Activated CD8-positive, alpha-beta memory T cell treated with anti-CD3 and anti-CD28 coated beads, Interleukin-2, amount 10 ng/mL, durations not matched to agents 7 days and 5 days (primary cell): ENCODE measurements at regions of chr17 and their contacts with region 1.

Region 1: DNA sequence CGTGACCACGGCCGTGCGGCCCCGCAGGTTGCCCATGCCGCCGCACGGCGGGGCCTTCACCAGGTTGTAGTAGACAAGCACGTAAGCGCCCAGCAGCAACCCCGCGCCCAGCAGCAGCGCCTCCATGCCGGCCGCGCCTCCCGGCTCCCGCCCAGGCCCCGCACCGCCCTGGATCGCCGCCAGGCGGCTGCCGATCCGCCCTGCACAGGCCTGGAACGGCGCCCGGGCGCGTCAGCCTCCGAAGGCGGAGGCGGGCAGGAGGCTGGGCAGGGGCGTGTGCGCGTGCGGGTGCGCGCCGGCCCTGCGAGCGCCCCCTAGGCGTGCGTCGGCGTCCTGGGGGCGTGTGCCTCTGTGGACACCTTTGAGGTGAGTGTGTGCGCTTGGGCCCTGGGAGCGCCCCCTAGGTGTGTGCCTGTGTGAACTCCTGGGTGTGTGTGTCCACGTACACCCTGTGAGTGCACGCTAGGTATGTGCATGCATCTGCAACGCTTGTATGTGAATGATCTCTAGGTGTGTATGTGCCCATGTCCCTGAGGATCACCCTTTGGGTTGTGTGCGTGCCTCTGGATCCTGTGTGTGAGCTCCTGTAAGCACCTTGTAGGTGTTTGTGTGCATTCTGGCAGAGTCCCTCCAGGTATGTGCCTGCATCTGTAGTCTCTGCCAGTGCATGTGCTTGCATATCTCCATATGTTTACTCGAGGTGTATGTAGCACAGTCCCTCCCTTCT is at the start of gene DHRS13:
- DNase-seq: peak; percentile 94
- ATAC-seq: peak; percentile 97
- H3K4me3 Mint-ChIP-seq: peak within 1 kb of the TSS; percentile 89
- H3K27ac Mint-ChIP-seq: peak within 1 kb of the TSS; percentile 84
- H3K4me1 Mint-ChIP-seq: peaks cover 43% of the 10 kb centered on the region
- H3K27me3 Mint-ChIP-seq: no peaks in the 10 kb centered on the region
- total RNA-seq, gene DHRS13: 23.1 to 25.9 TPM

Region 2: DNA sequence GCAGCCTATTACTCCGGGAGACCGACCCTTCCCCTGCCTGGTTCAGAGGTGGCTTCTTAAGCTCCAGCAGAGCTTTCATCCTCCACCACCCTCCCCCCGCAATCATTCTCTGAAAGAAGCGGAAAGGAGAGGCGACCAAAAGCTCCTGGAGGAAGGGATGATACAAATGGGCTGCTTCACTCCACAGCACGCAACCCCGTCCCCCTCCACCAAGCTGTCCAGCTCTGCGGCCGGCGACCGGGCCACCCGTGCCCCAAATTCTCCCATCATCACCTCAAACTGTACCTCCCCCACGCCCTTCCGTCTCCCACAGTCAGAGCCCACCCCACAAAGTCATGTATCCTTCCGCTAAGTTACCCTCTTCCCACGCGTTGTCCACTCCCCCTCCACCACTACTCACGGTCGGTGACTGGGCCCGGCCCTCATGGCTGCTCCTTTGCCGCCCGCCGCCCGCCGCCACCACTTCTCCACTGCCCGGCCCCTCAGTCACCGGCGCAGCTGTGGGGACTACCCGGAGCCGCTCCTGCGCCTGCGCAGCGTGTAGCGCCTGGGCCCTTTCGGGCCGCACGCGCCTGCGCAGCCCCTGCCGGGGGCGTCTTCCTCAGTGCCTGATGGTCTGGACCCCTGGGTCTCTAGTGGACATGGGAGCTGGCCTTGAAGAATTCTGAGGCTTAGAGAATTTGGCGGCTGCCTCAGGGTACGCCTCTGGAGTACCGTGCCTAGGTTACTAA is 60.5 kb before region 1 on chr17 and contains the start of gene FAM222B:
- CTCF ChIA-PET with region 1: interaction called, 25 read pairs
- DNase-seq: peak; percentile 90
- ATAC-seq: peak; percentile 100
- H3K4me3 Mint-ChIP-seq: peak within 1 kb of the TSS; percentile 99
- H3K27ac Mint-ChIP-seq: peak within 1 kb of the TSS; percentile 96
- H3K4me1 Mint-ChIP-seq: peaks cover 21% of the 10 kb centered on the region
- H3K27me3 Mint-ChIP-seq: no peaks in the 10 kb centered on the region
- total RNA-seq, gene FAM222B: 14.5 to 19.6 TPM

Region 3: DNA sequence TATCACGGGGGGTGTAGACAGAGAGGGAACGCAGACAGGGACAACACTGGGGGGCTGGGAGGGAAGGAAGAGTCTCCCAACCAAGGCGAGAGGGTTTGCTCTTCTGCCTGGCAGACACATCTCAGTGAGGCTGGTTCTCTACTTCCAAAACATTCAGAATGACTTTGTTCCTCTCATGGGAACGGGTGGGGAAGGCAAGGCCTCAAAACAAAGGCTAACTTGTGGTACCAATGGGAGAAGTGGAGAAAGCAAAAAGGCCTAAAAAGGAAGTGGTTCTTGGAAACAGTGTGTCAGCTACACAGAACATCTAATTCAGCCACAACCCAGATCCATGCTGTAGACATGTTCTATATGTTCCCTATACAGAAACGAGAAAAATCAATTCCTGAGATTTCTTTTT is 13.0 kb before region 1 on chr17:
- CTCF ChIA-PET with region 1: interaction called, 28 read pairs
- DNase-seq: no peak
- ATAC-seq: no peak
- H3K4me3 Mint-ChIP-seq: no peak overlapping the region
- H3K27ac Mint-ChIP-seq: peak overlapping the region; percentile 27
- H3K4me1 Mint-ChIP-seq: peaks cover 42% of the 10 kb centered on the region
- H3K27me3 Mint-ChIP-seq: no peaks in the 10 kb centered on the region

Region 4: DNA sequence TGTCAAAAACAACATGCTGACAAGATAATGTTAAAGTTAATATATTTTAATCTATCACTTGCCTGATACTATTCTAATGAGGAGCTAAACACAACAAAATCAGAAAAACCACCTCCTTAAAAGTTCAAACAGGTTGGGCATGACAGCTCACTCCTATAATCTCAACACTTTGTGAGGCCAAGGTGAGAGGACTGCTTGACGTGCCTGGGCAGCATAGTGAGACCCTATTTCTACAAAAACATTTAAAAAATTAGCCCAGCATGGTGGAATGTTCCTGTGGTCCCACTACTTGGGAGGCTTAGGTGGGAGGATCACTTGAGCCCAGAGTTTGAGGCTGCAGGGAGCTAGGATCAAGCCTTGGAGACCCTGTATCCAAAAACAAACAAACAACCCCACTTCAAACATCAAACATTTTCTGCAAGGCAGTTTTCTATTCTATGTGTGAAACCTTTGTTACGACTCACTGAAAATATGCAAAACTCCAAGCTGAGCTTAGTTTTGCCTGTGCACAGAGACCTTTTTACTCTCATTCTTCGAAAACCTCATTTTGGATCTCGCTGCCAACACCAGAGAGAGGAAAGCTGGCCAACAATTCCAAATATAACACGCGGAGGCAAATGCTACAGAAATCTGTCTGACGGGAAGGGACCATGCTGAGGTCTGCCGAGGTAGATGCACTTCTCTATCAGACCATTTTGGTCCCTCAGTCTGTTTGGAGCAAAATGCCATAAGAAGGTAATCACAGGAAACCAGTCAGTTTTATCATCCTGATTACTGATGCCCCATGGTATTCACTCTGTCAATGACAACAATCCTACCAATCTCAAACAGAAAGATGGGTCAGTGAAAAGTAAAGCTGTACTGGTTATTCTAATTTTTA is 42.1 kb after region 1 on chr17:
- CTCF ChIA-PET with region 1: interaction called, 18 read pairs
- DNase-seq: no peak
- ATAC-seq: no peak
- H3K4me3 Mint-ChIP-seq: no peak overlapping the region
- H3K27ac Mint-ChIP-seq: no peak overlapping the region
- H3K4me1 Mint-ChIP-seq: peaks cover 68% of the 10 kb centered on the region
- H3K27me3 Mint-ChIP-seq: no peaks in the 10 kb centered on the region

Region 5: GRCh38 chr17:29124117-29124924 is 221.3 kb after region 1 on chr17:
- CTCF ChIA-PET with region 1: no interaction called
- DNase-seq: peak; percentile 66
- ATAC-seq: peak; percentile 91
- H3K4me3 Mint-ChIP-seq: no peak overlapping the region
- H3K27ac Mint-ChIP-seq: no peak overlapping the region
- H3K4me1 Mint-ChIP-seq: peaks cover 2% of the 10 kb centered on the region
- H3K27me3 Mint-ChIP-seq: no peaks in the 10 kb centered on the region